ENCODE measurements at regions of chr1 and their contacts with region 1.

Region 1: GRCh38 chr1:226662642-226663326 is 76.3 kb downstream of the ITPKB start:
- DNase-seq: peak; percentile 47 to 96 (median 76)
- ATAC-seq: peak; percentile 92
- H3K4me3 ChIP-seq: peak overlapping the region; percentile 2
- H3K4me3 Mint-ChIP-seq: peak overlapping the region in 9 of 10 donors; percentile 63 to 81 (median 77)
- H3K27ac ChIP-seq: no peak overlapping the region
- H3K27ac Mint-ChIP-seq: peak overlapping the region in 1 of 9 donors; percentile 91
- H3K4me1 ChIP-seq: peaks cover 0 to 80% of the 10 kb centered on the region in 2 donors
- H3K4me1 Mint-ChIP-seq: peaks cover 0 to 92% (median 0%) of the 10 kb centered on the region in 7 donors
- H3K27me3 ChIP-seq: no peaks in the 10 kb centered on the region
- H3K27me3 Mint-ChIP-seq: no peaks in the 10 kb centered on the region

Region 2: GRCh38 chr1:225710804-225711203 is 952.0 kb before region 1 on chr1:
- CTCF ChIA-PET with region 1: no interaction called
- POLR2A ChIA-PET with region 1: no interaction called
- intact Hi-C with region 1: no loop called
- DNase-seq: no peak
- ATAC-seq: no peak
- H3K4me3 ChIP-seq: no peak overlapping the region
- H3K4me3 Mint-ChIP-seq: no peak overlapping the region
- H3K27ac ChIP-seq: no peak overlapping the region
- H3K27ac Mint-ChIP-seq: no peak overlapping the region
- H3K4me1 ChIP-seq: no peaks in the 10 kb centered on the region
- H3K4me1 Mint-ChIP-seq: no peaks in the 10 kb centered on the region
- H3K27me3 ChIP-seq: no peaks in the 10 kb centered on the region
- H3K27me3 Mint-ChIP-seq: peaks cover 0 to 8% (median 0%) of the 10 kb centered on the region in 5 donors

Region 3: DNA sequence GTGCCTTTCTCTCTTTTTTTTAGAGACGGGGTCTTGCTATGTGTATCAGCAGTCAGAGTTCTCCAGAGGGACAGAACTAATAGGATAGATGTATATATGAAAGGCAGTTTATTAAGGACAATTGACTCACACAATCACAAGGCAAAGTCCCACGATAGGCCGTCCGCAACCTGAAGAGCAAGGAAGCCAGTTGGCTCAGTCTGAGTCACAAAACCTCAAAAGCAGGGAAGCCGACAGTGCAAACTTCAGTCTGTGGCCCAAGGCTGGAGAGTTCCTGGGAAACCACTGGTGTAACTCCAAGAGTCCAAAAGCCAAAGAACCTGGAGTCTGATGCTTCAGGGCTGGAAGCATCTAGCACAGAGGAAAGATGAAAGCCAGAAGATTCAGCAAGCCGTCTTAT is 616.5 kb before region 1 on chr1:
- CTCF ChIA-PET with region 1: no interaction called
- POLR2A ChIA-PET with region 1: no interaction called
- intact Hi-C with region 1: no loop called
- DNase-seq: no peak
- ATAC-seq: no peak
- H3K4me3 ChIP-seq: no peak overlapping the region
- H3K4me3 Mint-ChIP-seq: no peak overlapping the region
- H3K27ac ChIP-seq: no peak overlapping the region
- H3K27ac Mint-ChIP-seq: peak overlapping the region in 1 of 9 donors; percentile 20
- H3K4me1 ChIP-seq: peaks cover 0 to 2% of the 10 kb centered on the region in 2 donors
- H3K4me1 Mint-ChIP-seq: peaks cover 0 to 1% (median 0%) of the 10 kb centered on the region in 7 donors
- H3K27me3 ChIP-seq: no peaks in the 10 kb centered on the region
- H3K27me3 Mint-ChIP-seq: peaks cover 0 to 11% (median 0%) of the 10 kb centered on the region in 5 donors

Region 4: DNA sequence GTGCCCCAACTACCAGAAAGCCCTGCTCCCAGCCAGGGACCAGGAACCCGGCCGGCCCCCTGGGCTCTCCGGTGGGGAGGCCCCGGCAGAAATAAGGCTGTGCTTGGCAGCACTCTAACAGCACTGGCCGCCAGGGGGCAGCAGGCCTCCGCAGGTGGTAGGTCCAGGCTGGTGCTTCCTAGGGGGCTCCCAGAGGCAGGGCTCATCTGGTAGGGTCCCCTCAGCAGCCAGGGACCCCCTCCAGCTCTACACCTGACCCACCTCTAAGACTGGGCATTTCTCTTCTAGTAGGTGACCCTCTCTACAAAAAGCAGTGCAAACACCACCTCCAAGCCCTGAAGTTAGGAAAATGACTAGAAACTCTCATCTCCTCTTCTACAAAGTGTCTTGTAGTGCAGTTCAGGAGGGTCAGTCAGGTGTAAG is 28.6 kb before region 1 on chr1:
- CTCF ChIA-PET with region 1: interaction called, 5 read pairs
- POLR2A ChIA-PET with region 1: interaction called, 3 read pairs
- intact Hi-C with region 1: loop called in 1 of 2 experiments (anchors 1 kb)
- DNase-seq: peak; percentile 69 to 86 (median 79)
- ATAC-seq: peak; percentile 89
- H3K4me3 ChIP-seq: no peak overlapping the region
- H3K4me3 Mint-ChIP-seq: peak overlapping the region; percentile 10 to 90 (median 64)
- H3K27ac ChIP-seq: peak overlapping the region; percentile 54
- H3K27ac Mint-ChIP-seq: peak overlapping the region; percentile 76 to 98 (median 90)
- H3K4me1 ChIP-seq: peaks cover 26 to 48% of the 10 kb centered on the region in 2 donors
- H3K4me1 Mint-ChIP-seq: peaks cover 23 to 75% (median 61%) of the 10 kb centered on the region in 7 donors
- H3K27me3 ChIP-seq: no peaks in the 10 kb centered on the region
- H3K27me3 Mint-ChIP-seq: no peaks in the 10 kb centered on the region

Region 5: GRCh38 chr1:226649780-226650179 is 13.0 kb before region 1 on chr1:
- CTCF ChIA-PET with region 1: interaction called, 4 read pairs
- POLR2A ChIA-PET with region 1: interaction called, 28 read pairs
- intact Hi-C with region 1: loop called (anchors 1 kb)
- DNase-seq: peak in 6 of 9 donors; percentile 48 to 58 (median 54)
- ATAC-seq: no peak
- H3K4me3 ChIP-seq: no peak overlapping the region
- H3K4me3 Mint-ChIP-seq: peak overlapping the region in 5 of 10 donors; percentile 15 to 50 (median 17)
- H3K27ac ChIP-seq: no peak overlapping the region
- H3K27ac Mint-ChIP-seq: no peak overlapping the region
- H3K4me1 ChIP-seq: peaks cover 23 to 51% of the 10 kb centered on the region in 2 donors
- H3K4me1 Mint-ChIP-seq: peaks cover 0 to 83% (median 63%) of the 10 kb centered on the region in 7 donors
- H3K27me3 ChIP-seq: no peaks in the 10 kb centered on the region
- H3K27me3 Mint-ChIP-seq: no peaks in the 10 kb centered on the region

Region 6: GRCh38 chr1:226697151-226697939 is 34.6 kb after region 1 on chr1:
- CTCF ChIA-PET with region 1: interaction called, 4 read pairs
- POLR2A ChIA-PET with region 1: interaction called, 14 read pairs
- intact Hi-C with region 1: no loop called
- DNase-seq: peak in 6 of 9 donors; percentile 47 to 76 (median 56)
- ATAC-seq: peak; percentile 81
- H3K4me3 ChIP-seq: no peak overlapping the region
- H3K4me3 Mint-ChIP-seq: peak overlapping the region in 9 of 10 donors; percentile 36 to 89 (median 70)
- H3K27ac ChIP-seq: peak overlapping the region; percentile 86
- H3K27ac Mint-ChIP-seq: peak overlapping the region; percentile 38 to 100 (median 98)
- H3K4me1 ChIP-seq: peaks cover 39 to 82% of the 10 kb centered on the region in 2 donors
- H3K4me1 Mint-ChIP-seq: peaks cover 68 to 100% (median 91%) of the 10 kb centered on the region in 7 donors
- H3K27me3 ChIP-seq: no peaks in the 10 kb centered on the region
- H3K27me3 Mint-ChIP-seq: no peaks in the 10 kb centered on the region

Region 7: DNA sequence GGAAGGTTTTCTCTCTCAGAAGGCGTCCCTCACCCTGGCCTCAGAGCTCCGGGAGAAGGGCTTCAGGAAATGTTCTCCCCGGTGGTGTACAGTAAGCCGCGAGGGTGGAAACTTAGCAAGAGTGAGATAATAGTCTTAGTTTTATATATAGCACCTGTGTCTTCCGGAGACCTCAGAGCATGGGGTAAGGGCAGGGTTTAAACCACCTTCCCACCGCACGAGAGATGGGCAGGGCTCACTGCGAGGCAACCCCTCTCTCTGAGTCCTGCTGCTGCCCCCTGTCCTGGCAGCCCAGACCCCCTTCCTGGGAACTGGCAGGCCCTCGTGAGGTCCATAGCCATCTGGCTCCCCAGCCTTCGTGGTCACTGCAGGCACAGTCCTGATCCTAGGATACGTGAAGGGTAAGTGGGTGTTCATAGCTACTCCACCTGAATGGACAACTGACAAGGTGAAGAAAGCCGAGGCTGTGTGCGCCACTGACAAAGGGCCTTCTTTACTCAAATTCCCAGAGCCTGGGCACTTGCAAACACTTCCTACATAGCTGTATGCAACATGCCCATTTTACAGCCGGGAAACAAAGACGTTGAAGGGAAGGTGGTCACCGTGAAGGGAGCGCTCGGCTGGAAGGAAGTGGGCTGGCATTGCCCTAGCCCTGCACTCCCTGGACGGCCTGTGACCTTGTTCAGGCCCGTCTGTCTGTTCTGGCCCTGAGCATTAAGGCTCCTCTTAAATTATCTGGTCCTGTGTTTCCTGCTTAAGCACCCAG is 49.4 kb after region 1 on chr1:
- CTCF ChIA-PET with region 1: no interaction called
- POLR2A ChIA-PET with region 1: interaction called, 4 read pairs
- intact Hi-C with region 1: loop called in 1 of 2 experiments (anchors 2 kb)
- DNase-seq: peak in 7 of 9 donors; percentile 52 to 76 (median 61)
- ATAC-seq: peak; percentile 69
- H3K4me3 ChIP-seq: peak overlapping the region; percentile 43
- H3K4me3 Mint-ChIP-seq: peak overlapping the region; percentile 68 to 92 (median 82)
- H3K27ac ChIP-seq: peak overlapping the region; percentile 75
- H3K27ac Mint-ChIP-seq: peak overlapping the region; percentile 79 to 100 (median 95)
- H3K4me1 ChIP-seq: peaks cover 69 to 88% of the 10 kb centered on the region in 2 donors
- H3K4me1 Mint-ChIP-seq: peaks cover 72 to 100% (median 99%) of the 10 kb centered on the region in 7 donors
- H3K27me3 ChIP-seq: no peaks in the 10 kb centered on the region
- H3K27me3 Mint-ChIP-seq: no peaks in the 10 kb centered on the region

Region 8: GRCh38 chr1:226882631-226883409 is 220.0 kb after region 1 on chr1:
- CTCF ChIA-PET with region 1: no interaction called
- POLR2A ChIA-PET with region 1: no interaction called
- intact Hi-C with region 1: loop called in 1 of 2 experiments (anchors 5 kb)
- DNase-seq: peak in 8 of 9 donors; percentile 31 to 65 (median 52)
- ATAC-seq: peak; percentile 79
- H3K4me3 ChIP-seq: peak overlapping the region; percentile 48
- H3K4me3 Mint-ChIP-seq: peak overlapping the region; percentile 65 to 88 (median 80)
- H3K27ac ChIP-seq: peak overlapping the region; percentile 73
- H3K27ac Mint-ChIP-seq: peak overlapping the region; percentile 85 to 98 (median 91)
- H3K4me1 ChIP-seq: peaks cover 4 to 34% of the 10 kb centered on the region in 2 donors
- H3K4me1 Mint-ChIP-seq: peaks cover 44 to 57% (median 51%) of the 10 kb centered on the region in 7 donors
- H3K27me3 ChIP-seq: no peaks in the 10 kb centered on the region
- H3K27me3 Mint-ChIP-seq: no peaks in the 10 kb centered on the region

Region 9: DNA sequence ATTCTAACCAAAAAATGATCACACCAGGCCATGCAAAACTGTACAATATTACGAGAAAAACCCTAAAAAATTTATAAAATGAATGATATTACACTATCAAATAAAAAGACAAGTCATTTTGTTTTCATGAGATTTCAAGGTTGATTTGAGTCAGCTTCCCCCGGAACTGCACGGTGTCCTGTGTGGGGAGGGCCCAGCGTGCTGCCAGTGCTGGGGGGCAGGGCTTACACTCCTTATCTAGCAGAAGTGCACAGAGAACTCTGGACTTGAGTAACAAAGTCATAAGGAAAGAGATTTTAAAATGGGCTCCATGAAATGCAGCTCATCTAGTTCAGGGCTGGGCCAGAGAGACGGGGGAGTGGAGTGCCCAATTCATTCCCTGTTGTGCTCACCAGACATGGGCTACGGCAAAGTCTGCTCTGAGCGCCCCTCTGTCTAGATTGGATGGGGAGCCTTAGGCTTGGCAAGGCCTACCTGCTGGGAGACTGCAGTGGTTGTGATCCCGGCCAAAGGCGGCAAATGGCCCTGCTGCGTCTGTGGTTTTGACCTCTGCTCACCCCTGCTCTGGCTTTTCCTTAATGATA is 327.4 kb after region 1 on chr1:
- CTCF ChIA-PET with region 1: no interaction called
- POLR2A ChIA-PET with region 1: no interaction called
- intact Hi-C with region 1: no loop called
- DNase-seq: peak in 4 of 9 donors; percentile 8 to 16 (median 12)
- ATAC-seq: peak; percentile 84
- H3K4me3 ChIP-seq: no peak overlapping the region
- H3K4me3 Mint-ChIP-seq: peak overlapping the region in 6 of 10 donors; percentile 12 to 65 (median 40)
- H3K27ac ChIP-seq: no peak overlapping the region
- H3K27ac Mint-ChIP-seq: peak overlapping the region in 8 of 9 donors; percentile 5 to 86 (median 76)
- H3K4me1 ChIP-seq: peaks cover 0 to 4% of the 10 kb centered on the region in 2 donors
- H3K4me1 Mint-ChIP-seq: peaks cover 12 to 28% (median 16%) of the 10 kb centered on the region in 7 donors
- H3K27me3 ChIP-seq: no peaks in the 10 kb centered on the region
- H3K27me3 Mint-ChIP-seq: no peaks in the 10 kb centered on the region